Motor neuron (in vitro differentiated cells): ENCODE measurements at regions of chr7 and their contacts with region 1.

Region 1: GRCh38 chr7:20798081-20798693 is 11.5 kb upstream of the SP8 start:
- ATAC-seq: peak; percentile 68 to 87 (median 82)
- H3K4me3 ChIP-seq: peak overlapping the region; percentile 46 to 69 (median 53)
- H3K27ac ChIP-seq: peak overlapping the region; percentile 78 to 85
- H3K4me1 ChIP-seq: peaks cover 20 to 45% of the 10 kb centered on the region in 2 donors

Region 2: DNA sequence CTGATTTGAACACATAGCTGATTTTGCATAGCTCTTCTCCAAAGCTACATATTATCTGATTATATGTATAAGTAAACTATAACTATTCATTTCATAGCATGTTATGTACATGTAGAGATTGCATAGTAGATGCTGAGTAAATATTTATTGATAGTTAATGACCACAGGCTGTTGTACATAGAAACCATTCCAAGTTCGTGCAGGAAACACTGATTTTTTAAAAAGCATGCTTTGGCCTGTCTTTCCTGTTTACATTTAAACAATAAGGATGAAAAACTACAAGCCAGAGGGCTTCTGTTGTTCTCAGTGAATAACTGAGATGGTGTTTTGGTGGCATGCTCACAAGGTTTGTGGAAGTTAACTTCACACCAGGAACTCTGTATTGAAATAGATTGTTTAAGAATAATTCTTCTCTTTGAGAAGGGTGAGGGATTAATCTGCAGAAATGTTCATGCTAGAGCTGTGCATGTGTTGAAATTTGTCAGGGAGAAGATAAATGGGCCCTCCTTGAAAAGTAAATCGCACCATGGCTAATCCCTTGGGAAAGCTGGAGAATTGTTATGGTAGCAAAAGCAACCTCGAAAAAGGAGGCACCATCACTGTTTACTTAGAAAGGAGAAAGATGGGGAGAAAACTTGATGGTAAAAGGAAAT is 108.7 kb after region 1 on chr7:
- in situ Hi-C with region 1: no loop called
- ATAC-seq: peak in 6 of 8 experiments; percentile 50 to 93 (median 85)
- H3K4me3 ChIP-seq: no peak overlapping the region
- H3K27ac ChIP-seq: no peak overlapping the region
- H3K4me1 ChIP-seq: peaks cover 26 to 37% of the 10 kb centered on the region in 2 donors

Region 3: GRCh38 chr7:20980668-20981264 is 182.6 kb after region 1 on chr7:
- in situ Hi-C with region 1: no loop called
- ATAC-seq: peak in 5 of 8 experiments; percentile 81 to 90 (median 87)
- H3K4me3 ChIP-seq: no peak overlapping the region
- H3K27ac ChIP-seq: peak overlapping the region in 1 of 2 donors; percentile 11
- H3K4me1 ChIP-seq: peaks cover 31 to 45% of the 10 kb centered on the region in 2 donors

Region 4: GRCh38 chr7:21243265-21243664 is 445.1 kb after region 1 on chr7:
- in situ Hi-C with region 1: loop called in 2 of 9 experiments (anchors 25 kb)
- ATAC-seq: peak in 3 of 8 experiments; percentile 32 to 44 (median 34)
- H3K4me3 ChIP-seq: no peak overlapping the region
- H3K27ac ChIP-seq: no peak overlapping the region
- H3K4me1 ChIP-seq: peaks cover 0 to 3% of the 10 kb centered on the region in 2 donors

Region 5: DNA sequence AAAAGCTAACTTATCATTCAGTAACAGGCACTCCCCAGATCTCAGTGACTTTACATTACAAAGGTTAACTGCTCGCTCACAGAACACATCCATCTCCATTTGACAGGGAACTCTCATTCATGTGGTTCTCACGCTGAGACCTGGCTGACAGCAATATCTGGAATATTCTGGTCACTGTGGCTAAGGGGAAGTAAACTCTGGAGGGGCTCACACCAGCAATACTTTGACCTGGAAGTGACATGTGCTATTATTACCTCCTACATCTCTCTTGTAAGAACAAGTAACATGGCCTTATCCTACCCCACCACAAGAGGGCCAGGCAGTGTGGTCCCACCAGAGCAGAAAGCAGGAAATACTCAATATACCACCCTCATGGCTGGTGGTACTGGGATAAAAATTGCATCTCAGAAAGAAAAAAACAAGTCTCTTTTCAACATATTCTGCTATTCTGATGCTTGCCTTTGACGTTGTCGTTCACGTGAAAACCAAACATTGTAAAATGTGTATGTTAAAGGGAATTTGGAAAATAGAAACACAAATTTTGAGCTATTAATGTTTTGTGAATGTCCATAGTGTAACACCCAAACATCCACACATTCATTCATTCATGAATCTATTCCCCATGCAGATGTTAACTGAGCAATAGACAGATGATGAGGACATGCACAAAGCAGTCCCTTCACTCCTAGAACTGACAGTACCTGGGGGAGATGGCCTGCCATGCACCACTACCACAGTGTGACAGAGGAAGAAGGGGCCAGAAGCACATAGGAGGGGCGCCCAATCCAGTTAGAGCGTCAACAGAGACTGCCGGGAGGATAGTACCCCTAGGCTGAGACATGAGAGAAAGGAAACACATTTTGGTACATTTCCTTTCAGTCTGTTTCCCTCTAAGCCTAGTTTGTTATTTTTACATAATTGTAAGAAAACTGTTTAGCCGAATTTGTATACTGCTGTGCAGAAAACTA is 463.7 kb after region 1 on chr7:
- in situ Hi-C with region 1: loop called in 4 of 9 experiments (anchors 10 to 25 kb)
- ATAC-seq: peak; percentile 58 to 98 (median 94)
- H3K4me3 ChIP-seq: no peak overlapping the region
- H3K27ac ChIP-seq: no peak overlapping the region
- H3K4me1 ChIP-seq: peaks cover 6 to 14% of the 10 kb centered on the region in 2 donors

Region 6: GRCh38 chr7:21507626-21508343 is 709.6 kb after region 1 on chr7:
- in situ Hi-C with region 1: loop called in 1 of 9 experiments (anchors 25 kb)
- ATAC-seq: peak in 3 of 8 experiments; percentile 72 to 88 (median 76)
- H3K4me3 ChIP-seq: no peak overlapping the region
- H3K27ac ChIP-seq: no peak overlapping the region
- H3K4me1 ChIP-seq: no peaks in the 10 kb centered on the region